ENCODE measurements at regions of chr14 and their contacts with region 1.

Region 1: GRCh38 chr14:94373708-94374107 is 14.7 kb downstream of the SERPINA1 start:
- DNase-seq: no peak
- H3K4me3 ChIP-seq: no peak overlapping the region
- H3K27ac ChIP-seq: no peak overlapping the region
- H3K4me1 ChIP-seq: peaks cover 6 to 12% (median 8%) of the 10 kb centered on the region in 4 experiments
- H3K27me3 ChIP-seq: no peaks in the 10 kb centered on the region
- CTCF ChIP-seq: no peak
- EP300 ChIP-seq: no peak
- POLR2A ChIP-seq: no peak
- RAD21 ChIP-seq: no peak

Region 2: GRCh38 chr14:94386085-94387031 is 12.7 kb after region 1 on chr14:
- CTCF ChIA-PET with region 1: interaction called, 37 read pairs
- POLR2A ChIA-PET with region 1: interaction called, 6 read pairs
- DNase-seq: no peak
- H3K4me3 ChIP-seq: no peak overlapping the region
- H3K27ac ChIP-seq: no peak overlapping the region
- H3K4me1 ChIP-seq: peaks cover 3 to 21% (median 11%) of the 10 kb centered on the region in 4 experiments; a peak in 6 of 7 replicates
- H3K27me3 ChIP-seq: no peaks in the 10 kb centered on the region; a peak in 1 of 7 replicates
- CTCF ChIP-seq: no peak
- EP300 ChIP-seq: no peak
- POLR2A ChIP-seq: no peak
- RAD21 ChIP-seq: no peak

Region 3: GRCh38 chr14:94392510-94392935 is 18.8 kb after region 1 on chr14:
- CTCF ChIA-PET with region 1: interaction called, 37 read pairs
- POLR2A ChIA-PET with region 1: interaction called, 6 read pairs
- DNase-seq: no peak
- H3K4me3 ChIP-seq: no peak overlapping the region
- H3K27ac ChIP-seq: no peak overlapping the region
- H3K4me1 ChIP-seq: peaks cover 5 to 27% (median 13%) of the 10 kb centered on the region in 4 experiments; a peak in 6 of 7 replicates
- H3K27me3 ChIP-seq: no peaks in the 10 kb centered on the region; a peak in 1 of 7 replicates
- CTCF ChIP-seq: no peak
- EP300 ChIP-seq: no peak
- POLR2A ChIP-seq: no peak
- RAD21 ChIP-seq: no peak

Region 4: GRCh38 chr14:94612174-94612573 is 238.5 kb after region 1 on chr14 and contains the start of gene SERPINA3:
- CTCF ChIA-PET with region 1: no interaction called
- POLR2A ChIA-PET with region 1: no interaction called
- DNase-seq: no peak
- H3K4me3 ChIP-seq: no peak within 1 kb of the TSS
- H3K27ac ChIP-seq: no peak within 1 kb of the TSS
- H3K4me1 ChIP-seq: no peaks in the 10 kb centered on the region; a peak in 1 of 7 replicates
- H3K27me3 ChIP-seq: no peaks in the 10 kb centered on the region
- CTCF ChIP-seq: no peak
- EP300 ChIP-seq: no peak
- POLR2A ChIP-seq: no peak
- RAD21 ChIP-seq: no peak
- total RNA-seq, gene SERPINA3: not detected in 2 replicates

Measured in H1 (cell line).